ENCODE measurements at regions of chr12 and their contacts with region 1.

Region 1: GRCh38 chr12:26097046-26097878 is 27.6 kb downstream of the BHLHE41 start:
- DNase-seq: peak; percentile 39
- ATAC-seq: peak; percentile 100
- H3K4me3 Mint-ChIP-seq: no peak overlapping the region
- H3K27ac Mint-ChIP-seq: no peak overlapping the region
- H3K4me1 Mint-ChIP-seq: peaks cover 5% of the 10 kb centered on the region
- H3K27me3 Mint-ChIP-seq: no peaks in the 10 kb centered on the region
- CTCF ChIP-seq: peak; percentile 88

Region 2: DNA sequence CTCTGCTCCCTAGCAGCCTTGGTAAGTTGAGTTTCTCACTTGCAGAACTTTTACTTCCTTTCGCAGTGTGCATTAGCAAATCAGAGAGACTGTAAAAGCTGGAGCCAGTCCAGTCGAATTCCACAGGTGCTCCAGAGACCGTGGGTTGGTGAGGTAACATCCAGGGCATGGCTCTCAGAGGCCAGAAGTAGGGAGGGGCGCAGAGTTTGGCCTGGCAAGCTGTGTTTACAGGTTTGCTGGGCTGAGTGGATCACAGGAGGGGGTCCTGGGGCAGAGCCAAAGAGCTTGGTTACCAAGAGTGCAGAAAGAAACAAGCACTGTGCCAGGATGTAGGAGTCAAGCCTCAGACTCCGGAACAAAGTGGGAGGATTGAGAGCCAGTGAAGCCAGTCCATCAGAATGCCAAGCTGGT is 37.8 kb after region 1 on chr12:
- CTCF ChIA-PET with region 1: no interaction called
- POLR2A ChIA-PET with region 1: no interaction called
- intact Hi-C with region 1: no loop called
- DNase-seq: no peak
- ATAC-seq: no peak
- H3K4me3 Mint-ChIP-seq: no peak overlapping the region
- H3K27ac Mint-ChIP-seq: no peak overlapping the region
- H3K4me1 Mint-ChIP-seq: peaks cover 62% of the 10 kb centered on the region
- H3K27me3 Mint-ChIP-seq: no peaks in the 10 kb centered on the region
- CTCF ChIP-seq: no peak

Region 3: DNA sequence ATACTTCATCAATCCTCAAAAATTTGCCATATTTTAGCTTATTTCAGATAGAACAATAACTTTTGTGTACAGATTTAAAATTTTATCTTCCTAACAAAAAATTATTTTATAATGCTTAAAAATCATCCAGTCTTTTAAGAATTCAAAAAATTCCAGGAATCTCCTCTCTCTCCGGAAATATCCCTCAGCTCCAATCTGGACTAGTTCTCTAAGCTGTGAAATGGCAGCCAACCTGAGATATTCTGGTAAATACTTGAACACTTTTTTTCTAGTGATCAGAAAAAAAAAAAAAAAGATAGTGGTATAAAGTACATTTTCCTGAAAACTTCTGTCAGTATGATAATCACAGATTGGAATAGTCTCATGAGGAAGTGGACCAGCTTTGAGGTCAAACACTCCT is 155.7 kb after region 1 on chr12:
- CTCF ChIA-PET with region 1: no interaction called
- POLR2A ChIA-PET with region 1: no interaction called
- intact Hi-C with region 1: no loop called
- DNase-seq: no peak
- ATAC-seq: no peak
- H3K4me3 Mint-ChIP-seq: no peak overlapping the region
- H3K27ac Mint-ChIP-seq: no peak overlapping the region
- H3K4me1 Mint-ChIP-seq: peaks cover 6% of the 10 kb centered on the region
- H3K27me3 Mint-ChIP-seq: no peaks in the 10 kb centered on the region
- CTCF ChIP-seq: no peak

Region 4: GRCh38 chr12:26402648-26403047 is 305.4 kb after region 1 on chr12:
- CTCF ChIA-PET with region 1: interaction called, 7 read pairs
- POLR2A ChIA-PET with region 1: no interaction called
- intact Hi-C with region 1: loop called (anchors 1 kb)
- DNase-seq: no peak
- ATAC-seq: peak; percentile 54
- H3K4me3 Mint-ChIP-seq: no peak overlapping the region
- H3K27ac Mint-ChIP-seq: no peak overlapping the region
- H3K4me1 Mint-ChIP-seq: no peaks in the 10 kb centered on the region
- H3K27me3 Mint-ChIP-seq: no peaks in the 10 kb centered on the region
- CTCF ChIP-seq: no peak

Region 5: GRCh38 chr12:26434299-26435068 is 337.2 kb after region 1 on chr12:
- CTCF ChIA-PET with region 1: interaction called, 5 read pairs
- POLR2A ChIA-PET with region 1: no interaction called
- intact Hi-C with region 1: loop called (anchors 1 kb)
- DNase-seq: no peak
- ATAC-seq: peak; percentile 86
- H3K4me3 Mint-ChIP-seq: no peak overlapping the region
- H3K27ac Mint-ChIP-seq: no peak overlapping the region
- H3K4me1 Mint-ChIP-seq: no peaks in the 10 kb centered on the region
- H3K27me3 Mint-ChIP-seq: no peaks in the 10 kb centered on the region
- CTCF ChIP-seq: peak; percentile 74

Region 6: DNA sequence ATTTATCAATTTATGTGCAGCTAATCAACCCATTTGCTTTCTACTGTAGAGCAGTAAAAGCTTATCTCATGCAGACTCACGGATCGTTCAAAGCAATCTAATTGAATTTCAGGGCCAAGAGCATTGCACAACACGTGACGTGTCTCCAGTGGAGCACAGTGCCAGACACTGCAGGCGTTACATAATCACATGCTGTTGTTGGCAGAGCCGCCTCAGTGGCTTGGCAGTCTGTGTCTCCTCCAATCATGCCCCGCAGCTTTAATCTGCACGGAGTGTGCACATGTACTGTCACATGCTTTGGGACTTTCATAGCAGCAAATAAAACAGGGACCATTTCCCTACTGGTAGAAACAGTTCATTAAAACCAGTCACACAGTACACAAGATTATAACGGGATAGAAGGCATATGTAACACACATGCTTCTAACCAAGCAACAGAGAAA is 426.5 kb after region 1 on chr12:
- CTCF ChIA-PET with region 1: interaction called, 14 read pairs
- POLR2A ChIA-PET with region 1: no interaction called
- intact Hi-C with region 1: loop called (anchors 1 kb)
- DNase-seq: no peak
- ATAC-seq: no peak
- H3K4me3 Mint-ChIP-seq: no peak overlapping the region
- H3K27ac Mint-ChIP-seq: no peak overlapping the region
- H3K4me1 Mint-ChIP-seq: peaks cover 20% of the 10 kb centered on the region
- H3K27me3 Mint-ChIP-seq: no peaks in the 10 kb centered on the region
- CTCF ChIP-seq: no peak

Region 7: DNA sequence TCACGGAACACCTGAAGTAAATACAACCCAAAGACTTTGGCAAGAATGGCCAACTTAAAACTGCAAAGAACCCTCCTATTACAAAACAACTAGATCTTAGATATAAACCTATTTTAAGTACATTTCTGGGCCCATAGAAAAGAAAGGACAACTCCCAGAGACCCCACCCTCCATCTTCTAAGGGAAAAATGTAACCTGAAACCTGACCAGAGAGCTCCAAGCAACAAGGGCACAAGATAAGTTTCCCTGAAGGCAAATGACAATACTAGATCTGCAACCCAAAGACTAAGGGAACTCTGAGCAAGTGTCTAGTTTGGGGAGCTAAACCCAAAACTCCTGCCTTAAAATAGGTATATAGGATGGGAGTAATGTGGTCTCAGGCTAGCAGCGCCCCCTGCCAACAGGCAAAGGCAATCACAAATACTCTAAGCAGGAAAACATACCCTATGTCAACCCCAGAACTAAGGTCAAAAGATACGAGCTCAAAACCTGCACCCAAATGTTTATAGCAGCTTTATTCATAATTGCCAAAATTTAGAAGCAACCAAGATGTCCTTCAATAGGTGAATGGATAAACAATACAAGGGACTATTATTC is 516.9 kb after region 1 on chr12:
- CTCF ChIA-PET with region 1: interaction called, 18 read pairs
- POLR2A ChIA-PET with region 1: no interaction called
- intact Hi-C with region 1: loop called (anchors 1 kb)
- DNase-seq: no peak
- ATAC-seq: peak; percentile 45
- H3K4me3 Mint-ChIP-seq: no peak overlapping the region
- H3K27ac Mint-ChIP-seq: no peak overlapping the region
- H3K4me1 Mint-ChIP-seq: no peaks in the 10 kb centered on the region
- H3K27me3 Mint-ChIP-seq: no peaks in the 10 kb centered on the region
- CTCF ChIP-seq: no peak

Region 8: DNA sequence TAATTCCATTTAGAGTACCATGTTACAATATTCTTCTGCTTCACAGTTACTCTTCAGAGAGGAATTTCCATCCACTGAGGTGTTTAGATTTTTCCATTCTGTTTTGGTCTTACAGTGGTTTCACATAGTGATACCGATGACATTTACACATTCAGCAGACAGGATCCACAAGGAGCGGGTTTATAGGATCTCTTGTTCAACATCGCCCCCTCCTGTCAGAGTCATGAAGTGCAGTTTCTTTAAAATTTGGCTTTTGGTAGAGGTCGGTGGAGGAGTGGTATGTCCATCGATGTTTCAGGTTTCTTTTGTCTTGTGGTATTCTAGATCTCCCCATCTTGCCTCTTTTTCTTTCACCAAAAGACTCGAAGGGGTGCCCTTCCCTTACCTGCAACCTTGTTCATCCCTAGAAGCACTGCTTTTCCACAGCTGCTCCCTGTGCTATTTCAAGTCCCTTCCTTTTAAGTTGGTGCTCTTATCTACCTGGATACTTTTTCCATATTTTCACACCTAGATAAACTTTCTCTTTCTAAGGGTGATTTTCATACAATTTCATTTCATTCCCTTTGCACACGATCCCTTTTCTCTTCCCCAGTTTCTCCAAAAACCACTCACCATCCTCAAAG is 554.4 kb after region 1 on chr12:
- CTCF ChIA-PET with region 1: interaction called, 17 read pairs
- POLR2A ChIA-PET with region 1: no interaction called
- intact Hi-C with region 1: loop called (anchors 1 kb)
- DNase-seq: no peak
- ATAC-seq: peak; percentile 62
- H3K4me3 Mint-ChIP-seq: no peak overlapping the region
- H3K27ac Mint-ChIP-seq: no peak overlapping the region
- H3K4me1 Mint-ChIP-seq: no peaks in the 10 kb centered on the region
- H3K27me3 Mint-ChIP-seq: no peaks in the 10 kb centered on the region
- CTCF ChIP-seq: no peak

Region 9: DNA sequence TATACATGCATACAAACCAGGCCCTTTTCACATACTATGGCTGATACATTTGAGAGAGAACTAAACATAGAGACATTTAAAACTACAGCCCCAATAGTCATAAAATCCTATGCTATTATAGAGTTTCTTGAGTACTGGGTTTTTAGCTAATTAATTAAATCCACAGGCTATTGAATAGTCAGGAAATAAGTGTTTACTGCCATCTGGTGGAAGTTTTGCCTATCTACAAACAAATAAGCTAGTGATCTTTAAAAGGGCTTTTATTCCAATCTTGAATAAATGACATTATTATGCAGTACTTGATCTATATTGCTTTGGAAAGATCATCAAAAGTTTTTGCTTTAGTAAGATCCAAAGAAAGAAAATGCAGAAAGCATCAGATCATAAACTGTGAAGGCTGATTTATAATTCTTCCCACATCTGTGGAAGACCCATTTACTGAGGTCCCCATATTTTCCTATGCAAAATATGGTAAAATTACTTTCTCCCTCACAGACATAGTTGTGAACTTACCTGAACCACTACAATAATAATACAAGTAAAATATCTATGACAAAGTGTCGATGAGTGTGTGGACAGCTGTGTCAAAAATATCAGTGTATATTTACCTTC is 604.4 kb after region 1 on chr12:
- CTCF ChIA-PET with region 1: interaction called, 4 read pairs
- POLR2A ChIA-PET with region 1: interaction called, 3 read pairs
- intact Hi-C with region 1: loop called (anchors 1 kb)
- DNase-seq: no peak
- ATAC-seq: no peak
- H3K4me3 Mint-ChIP-seq: no peak overlapping the region
- H3K27ac Mint-ChIP-seq: no peak overlapping the region
- H3K4me1 Mint-ChIP-seq: peaks cover 4% of the 10 kb centered on the region
- H3K27me3 Mint-ChIP-seq: no peaks in the 10 kb centered on the region
- CTCF ChIP-seq: peak; percentile 58

Measured in activated B cell treated with CpG ODN at 0.5 μM for 24 hours (primary cell).